Transverse colon (tissue), 4 donors: ENCODE measurements at regions of chr17 and their contacts with region 1.

Region 1: GRCh38 chr17:57995076-57995956 is 7.3 kb upstream of the VEZF1 start:
- DNase-seq: peak; percentile 66
- H3K4me3 ChIP-seq: no peak overlapping the region
- H3K27ac ChIP-seq: peak overlapping the region; percentile 49 to 73 (median 52)
- H3K4me1 ChIP-seq: peaks cover 7 to 34% (median 16%) of the 10 kb centered on the region in 4 donors
- H3K27me3 ChIP-seq: no peaks in the 10 kb centered on the region
- CTCF ChIP-seq: peak; percentile 60 to 90 (median 71)
- EP300 ChIP-seq: no peak
- POLR2A ChIP-seq: peak; percentile 25

Region 2: DNA sequence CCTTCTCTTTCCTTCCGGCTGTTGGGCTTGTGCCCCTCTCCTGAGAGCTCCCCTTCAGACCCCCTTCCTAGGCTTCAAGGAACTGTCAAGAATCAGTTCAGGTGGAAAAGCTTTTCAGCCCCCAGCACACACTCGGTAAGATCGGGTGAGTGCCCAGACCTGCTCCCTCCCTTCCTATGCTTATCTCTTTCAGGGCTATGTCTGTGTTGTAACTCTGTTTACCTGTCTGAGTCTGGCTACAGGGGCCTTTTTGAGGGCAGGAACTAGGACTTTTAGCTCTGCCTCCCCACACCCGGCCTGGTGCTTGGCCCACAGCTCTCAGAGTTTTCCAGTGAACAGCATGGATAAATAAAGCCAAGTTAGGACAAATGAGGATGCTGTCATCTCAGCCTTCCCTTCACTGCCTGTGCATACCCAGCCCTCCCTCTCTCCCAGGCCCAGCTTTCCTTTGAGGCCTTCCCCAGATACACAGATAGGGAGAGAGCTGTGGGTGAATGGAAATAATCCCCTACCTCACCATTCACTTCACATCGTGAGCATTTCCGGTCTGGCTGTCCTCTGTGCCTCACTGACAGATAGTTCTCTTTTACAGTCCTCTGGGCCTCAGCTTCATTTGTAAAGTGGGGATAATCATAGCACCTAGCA is 139.8 kb before region 1 on chr17:
- in situ Hi-C with region 1: loop called (anchors 5 kb)
- intact Hi-C with region 1: loop called (anchors 5 kb)
- DNase-seq: no peak
- H3K4me3 ChIP-seq: no peak overlapping the region
- H3K27ac ChIP-seq: peak overlapping the region in 2 of 4 donors; percentile 31 to 90
- H3K4me1 ChIP-seq: peaks cover 12 to 39% (median 21%) of the 10 kb centered on the region in 4 donors
- H3K27me3 ChIP-seq: no peaks in the 10 kb centered on the region
- CTCF ChIP-seq: no peak
- EP300 ChIP-seq: no peak
- POLR2A ChIP-seq: no peak

Region 3: DNA sequence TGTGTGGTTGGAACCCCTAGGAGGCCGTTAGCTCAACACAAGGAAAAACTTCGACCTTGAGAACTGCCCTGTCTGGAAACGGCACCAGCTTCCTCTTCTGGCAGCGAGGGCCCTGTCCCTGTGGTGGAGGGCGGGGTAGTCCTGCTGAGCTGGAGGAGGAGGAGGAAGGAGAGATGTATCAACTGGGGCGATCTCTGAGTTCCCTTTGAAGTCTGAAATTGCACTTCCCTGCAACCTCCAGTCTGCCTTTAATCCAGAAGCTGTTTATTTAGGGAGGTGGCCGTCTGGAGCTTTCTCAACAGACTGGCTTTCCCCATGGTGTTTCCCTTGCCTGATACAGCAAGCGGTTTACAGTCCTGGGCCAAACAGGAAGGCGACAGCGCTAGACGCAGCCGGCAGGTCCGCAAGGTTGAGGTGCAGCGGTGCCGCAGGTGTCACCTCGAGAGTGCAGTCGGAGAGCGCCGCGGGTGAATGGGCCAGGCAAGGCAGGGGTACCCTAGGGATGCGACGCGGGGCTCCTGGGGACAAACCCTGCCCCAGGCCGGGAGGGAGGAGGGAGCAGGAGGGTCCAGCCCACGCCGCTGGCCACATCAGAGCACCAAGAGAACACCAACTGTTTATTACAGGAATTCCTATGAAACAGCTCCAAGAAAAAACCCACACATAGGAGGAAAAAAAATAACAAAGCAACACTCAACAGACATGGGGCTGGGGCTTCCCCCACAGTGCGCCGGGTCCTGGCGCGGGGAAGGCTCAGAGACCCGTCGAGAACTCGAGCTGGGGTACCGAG is 134.1 kb before region 1 on chr17:
- in situ Hi-C with region 1: loop called (anchors 5 kb)
- intact Hi-C with region 1: loop called (anchors 5 kb)
- DNase-seq: peak; percentile 76
- H3K4me3 ChIP-seq: peak overlapping the region; percentile 21 to 63 (median 42)
- H3K27ac ChIP-seq: peak overlapping the region; percentile 82 to 92 (median 86)
- H3K4me1 ChIP-seq: peaks cover 16 to 38% (median 24%) of the 10 kb centered on the region in 4 donors
- H3K27me3 ChIP-seq: no peaks in the 10 kb centered on the region
- CTCF ChIP-seq: no peak
- EP300 ChIP-seq: no peak
- POLR2A ChIP-seq: peak; percentile 24